RWPE1 (cell line): ENCODE measurements at regions of chr17 and their contacts with region 1.

Region 1: GRCh38 chr17:9549215-9549614 is 26.4 kb downstream of the STX8 start:
- DNase-seq: no peak
- H3K27ac ChIP-seq: no peak overlapping the region
- CTCF ChIP-seq: no peak

Region 2: DNA sequence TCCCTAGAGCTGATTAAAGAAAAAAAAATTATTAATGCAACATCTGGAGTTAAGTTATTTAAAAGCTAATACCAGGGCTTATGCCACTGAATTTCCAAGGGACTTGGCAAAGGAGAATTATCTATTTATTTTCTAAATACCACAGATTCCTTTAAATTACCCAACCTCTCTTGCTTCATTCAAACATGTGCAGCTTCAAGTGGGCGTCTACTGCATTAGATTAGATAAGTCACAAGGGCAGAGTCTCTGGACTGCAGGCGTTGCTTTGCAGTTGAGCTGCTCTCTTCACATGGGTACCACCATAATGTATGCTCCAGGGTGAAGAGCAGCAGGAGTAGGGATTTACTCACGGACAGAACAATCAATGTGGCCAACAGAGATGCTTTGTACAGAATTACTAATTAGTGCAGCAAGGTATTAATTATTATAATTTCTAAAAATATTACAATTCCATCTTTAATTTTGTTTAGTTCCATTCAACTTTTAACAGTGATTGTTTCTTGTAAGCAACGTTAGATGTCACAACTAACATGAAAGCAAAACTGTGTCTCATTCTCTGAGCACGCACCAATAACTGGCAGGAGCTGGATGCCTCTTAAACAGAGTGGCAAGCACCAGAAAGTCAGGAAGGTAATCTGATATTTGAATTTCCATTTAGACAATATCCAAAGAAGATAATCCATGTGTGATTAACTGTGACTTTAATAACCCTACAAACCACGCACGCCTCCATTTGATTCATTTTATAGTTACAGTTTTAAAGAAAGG is 187.8 kb before region 1 on chr17:
- CTCF ChIA-PET with region 1: no interaction called
- POLR2A ChIA-PET with region 1: no interaction called
- DNase-seq: peak; percentile 19
- H3K27ac ChIP-seq: no peak overlapping the region
- CTCF ChIP-seq: no peak

Region 3: DNA sequence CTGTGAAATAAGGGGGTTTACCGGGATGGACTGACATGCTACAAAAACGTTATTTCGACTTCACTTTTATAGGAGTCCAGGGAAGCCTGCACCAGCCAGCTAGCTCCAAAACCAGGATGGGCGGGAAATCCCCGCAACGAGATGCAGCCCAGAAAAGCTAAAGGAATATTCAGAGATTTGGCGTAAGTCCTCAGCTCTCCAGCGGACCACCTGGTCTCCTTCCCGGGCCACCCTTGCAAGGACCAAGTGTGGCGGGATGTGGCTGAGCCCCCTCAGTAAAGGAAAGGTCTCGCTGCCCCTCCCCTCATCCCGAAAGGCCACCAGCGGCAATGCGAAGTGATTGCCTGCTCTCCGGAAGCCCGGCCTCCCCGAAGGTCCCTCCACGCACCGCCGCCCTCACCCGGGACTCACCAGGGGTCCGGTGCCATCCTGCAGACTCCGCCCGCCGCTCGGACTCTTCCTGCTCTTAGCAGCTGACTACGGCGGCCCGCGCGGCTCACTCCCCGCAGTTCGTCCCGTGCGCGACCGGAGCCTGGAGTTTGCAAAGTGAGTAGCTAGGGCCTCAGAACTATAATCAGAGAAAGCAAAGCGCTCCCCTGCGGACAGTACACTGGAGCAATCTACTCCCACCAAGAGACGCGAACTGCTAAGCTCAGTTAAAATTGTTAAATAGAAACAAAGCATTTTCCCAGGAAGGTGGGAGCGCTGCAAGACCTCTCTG is 26.3 kb after region 1 on chr17 and contains the start of gene STX8:
- CTCF ChIA-PET with region 1: no interaction called
- POLR2A ChIA-PET with region 1: no interaction called
- DNase-seq: peak; percentile 78
- H3K27ac ChIP-seq: peak within 1 kb of the TSS; percentile 80
- CTCF ChIP-seq: no peak

Region 4: GRCh38 chr17:9615486-9615885 is 66.3 kb after region 1 on chr17:
- CTCF ChIA-PET with region 1: interaction called, 10 read pairs
- POLR2A ChIA-PET with region 1: no interaction called
- DNase-seq: no peak
- H3K27ac ChIP-seq: peak overlapping the region; percentile 77
- CTCF ChIP-seq: no peak